Activated CD8-positive, alpha-beta memory T cell treated with anti-CD3 and anti-CD28 coated beads, Interleukin-2, amount 10 ng/mL, durations not matched to agents 7 days and 5 days (primary cell): ENCODE measurements at regions of chrX and their contacts with region 1.

Region 1: GRCh38 chrX:149539283-149540130 is 1.3 kb upstream of the EOLA1 start:
- DNase-seq: peak; percentile 96
- ATAC-seq: peak; percentile 65
- H3K4me3 Mint-ChIP-seq: peak overlapping the region; percentile 84
- H3K27ac Mint-ChIP-seq: peak overlapping the region; percentile 91
- H3K4me1 Mint-ChIP-seq: peaks cover 17% of the 10 kb centered on the region
- H3K27me3 Mint-ChIP-seq: no peaks in the 10 kb centered on the region

Region 2: DNA sequence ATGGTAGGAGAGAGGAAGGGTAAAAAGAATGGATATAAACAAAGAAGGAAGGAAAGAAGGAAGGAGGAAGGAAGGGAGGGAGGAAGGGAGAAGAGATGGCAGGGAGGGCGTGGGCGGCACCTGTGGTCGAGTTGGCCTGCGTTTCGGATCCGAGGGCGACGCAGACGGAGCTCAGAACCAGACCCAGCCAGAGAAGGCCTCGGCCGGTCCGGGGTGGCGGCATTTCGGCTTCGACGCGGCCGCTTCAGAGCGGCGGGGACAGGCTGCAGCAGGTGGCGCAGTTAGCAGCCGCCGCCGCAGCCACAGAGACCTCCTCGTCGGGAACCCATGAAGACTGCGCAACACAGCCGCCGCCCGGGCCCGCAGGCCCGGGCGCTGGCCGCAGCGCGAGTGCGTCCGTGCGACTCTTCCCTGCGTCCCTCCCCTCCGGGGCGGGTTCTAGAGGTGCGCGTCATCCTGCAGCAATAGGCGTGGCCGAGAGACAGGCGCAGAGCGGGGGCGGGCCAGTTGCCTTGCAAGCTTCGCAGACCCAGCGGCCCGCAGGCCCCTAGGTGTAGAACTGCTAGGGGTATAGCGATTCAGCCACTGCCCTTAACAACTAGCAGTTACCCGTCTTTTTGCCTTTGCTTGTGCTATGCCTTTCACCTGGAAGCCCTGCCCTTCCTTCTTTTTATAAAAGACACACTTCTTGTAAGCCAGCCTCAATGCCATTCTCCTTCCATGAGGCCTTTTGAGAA is 34.4 kb before region 1 on chrX and contains the start of gene IDS:
- CTCF ChIA-PET with region 1: interaction called, 11 read pairs
- DNase-seq: peak; percentile 93
- ATAC-seq: peak; percentile 71
- H3K4me3 Mint-ChIP-seq: peak within 1 kb of the TSS; percentile 100
- H3K27ac Mint-ChIP-seq: peak within 1 kb of the TSS; percentile 99
- H3K4me1 Mint-ChIP-seq: peaks cover 39% of the 10 kb centered on the region
- H3K27me3 Mint-ChIP-seq: no peaks in the 10 kb centered on the region
- total RNA-seq, gene IDS: 99.6 to 106 TPM

Region 3: GRCh38 chrX:149512225-149512885 is 27.2 kb before region 1 on chrX:
- CTCF ChIA-PET with region 1: interaction called, 20 read pairs
- DNase-seq: peak; percentile 70
- ATAC-seq: peak; percentile 65
- H3K4me3 Mint-ChIP-seq: no peak overlapping the region
- H3K27ac Mint-ChIP-seq: peak overlapping the region; percentile 85
- H3K4me1 Mint-ChIP-seq: peaks cover 57% of the 10 kb centered on the region
- H3K27me3 Mint-ChIP-seq: no peaks in the 10 kb centered on the region

Region 4: GRCh38 chrX:149527705-149528104 is 11.8 kb before region 1 on chrX:
- CTCF ChIA-PET with region 1: interaction called, 15 read pairs
- DNase-seq: peak; percentile 54
- ATAC-seq: peak; percentile 25
- H3K4me3 Mint-ChIP-seq: no peak overlapping the region
- H3K27ac Mint-ChIP-seq: peak overlapping the region; percentile 69
- H3K4me1 Mint-ChIP-seq: peaks cover 37% of the 10 kb centered on the region
- H3K27me3 Mint-ChIP-seq: no peaks in the 10 kb centered on the region